AG04449 (cell line): ENCODE measurements at regions of chr12 and their contacts with region 1.

Region 1: DNA sequence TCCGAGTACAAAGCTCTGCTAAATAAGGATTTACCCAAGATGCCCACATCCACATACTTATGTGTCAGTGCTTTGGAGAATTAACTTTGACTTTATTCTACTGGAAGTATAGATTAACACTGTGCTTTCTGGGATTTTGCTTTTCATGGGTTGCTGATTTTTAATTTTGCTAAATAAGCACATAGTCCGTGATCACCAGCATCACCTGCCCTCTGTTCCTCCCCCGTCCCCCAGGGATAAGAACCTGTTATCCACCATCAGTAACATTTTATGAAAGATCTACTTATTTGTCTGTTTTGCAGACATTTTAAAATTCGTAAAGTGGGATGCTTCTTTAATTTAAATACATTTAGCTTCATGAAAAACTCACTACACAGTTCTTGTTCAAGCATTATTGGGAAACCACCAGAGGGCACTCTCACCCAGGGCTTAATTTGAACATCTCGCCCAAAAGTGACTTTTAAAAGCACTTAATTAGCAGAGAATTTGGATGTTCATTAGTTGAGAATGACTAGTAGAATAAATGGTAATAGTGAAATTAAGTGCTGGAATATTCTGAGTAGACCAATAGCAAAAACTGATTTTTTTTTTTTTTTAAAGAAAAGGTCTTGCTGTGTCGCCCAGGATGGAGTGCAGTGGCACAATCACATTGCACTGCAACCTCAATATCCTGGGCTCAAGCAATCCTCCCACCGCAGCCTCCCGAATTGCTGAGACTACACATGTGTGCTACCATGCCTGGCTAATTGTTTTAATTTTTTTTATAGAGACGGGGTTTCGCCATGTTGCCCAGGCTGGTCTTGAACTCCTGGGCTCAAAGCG is 35.7 kb downstream of the MRPL42 start:
- DNase-seq: no peak
- H3K4me3 ChIP-seq: no peak overlapping the region
- CTCF ChIP-seq: peak; percentile 55

Region 2: DNA sequence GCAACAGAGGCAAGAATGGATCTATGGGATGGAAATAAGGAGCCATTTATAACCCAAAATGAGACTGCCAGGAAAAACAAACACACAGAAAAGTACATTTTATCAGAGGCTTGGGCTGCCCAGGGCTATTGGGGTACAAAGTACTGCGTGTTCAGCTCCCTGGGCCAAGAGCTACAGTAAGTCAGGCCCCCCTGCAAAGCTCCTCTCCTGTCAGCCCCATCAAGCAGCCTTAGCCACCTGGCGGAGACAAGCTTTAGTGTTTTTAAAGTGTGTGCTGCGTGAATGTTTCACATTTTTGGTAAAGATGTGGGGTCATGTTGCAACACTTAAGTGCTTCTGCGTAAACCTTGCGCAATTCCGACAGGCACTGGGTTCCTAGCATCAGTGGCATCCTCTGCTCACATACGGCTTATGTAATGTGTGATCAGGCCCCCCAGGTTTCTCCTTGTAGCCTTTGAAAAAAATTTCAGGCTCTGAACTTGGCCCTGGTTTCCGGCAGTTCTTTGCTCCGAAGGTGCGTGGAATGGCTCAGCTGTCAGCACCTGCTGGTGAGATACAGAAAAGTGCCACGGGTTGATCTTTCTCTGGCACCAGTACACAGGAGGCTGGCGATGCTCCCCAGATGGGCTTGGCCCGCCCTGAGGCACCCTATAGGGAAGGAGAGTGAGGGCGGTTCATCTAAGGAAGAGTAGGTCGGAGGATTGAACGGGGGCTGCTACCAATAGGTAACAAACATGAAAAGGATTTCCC is 375.3 kb before region 1 on chr12:
- CTCF ChIA-PET with region 1: no interaction called
- POLR2A ChIA-PET with region 1: no interaction called
- DNase-seq: no peak
- H3K4me3 ChIP-seq: no peak overlapping the region
- CTCF ChIP-seq: no peak

Region 3: GRCh38 chr12:93476555-93476954 is 26.5 kb before region 1 on chr12:
- CTCF ChIA-PET with region 1: interaction called, 11 read pairs
- POLR2A ChIA-PET with region 1: no interaction called
- DNase-seq: no peak
- H3K4me3 ChIP-seq: no peak overlapping the region
- CTCF ChIP-seq: no peak

Region 4: GRCh38 chr12:93514853-93515252 is 11.8 kb after region 1 on chr12:
- CTCF ChIA-PET with region 1: interaction called, 80 read pairs
- POLR2A ChIA-PET with region 1: no interaction called
- DNase-seq: peak; percentile 68
- H3K4me3 ChIP-seq: no peak overlapping the region
- CTCF ChIP-seq: no peak

Region 5: DNA sequence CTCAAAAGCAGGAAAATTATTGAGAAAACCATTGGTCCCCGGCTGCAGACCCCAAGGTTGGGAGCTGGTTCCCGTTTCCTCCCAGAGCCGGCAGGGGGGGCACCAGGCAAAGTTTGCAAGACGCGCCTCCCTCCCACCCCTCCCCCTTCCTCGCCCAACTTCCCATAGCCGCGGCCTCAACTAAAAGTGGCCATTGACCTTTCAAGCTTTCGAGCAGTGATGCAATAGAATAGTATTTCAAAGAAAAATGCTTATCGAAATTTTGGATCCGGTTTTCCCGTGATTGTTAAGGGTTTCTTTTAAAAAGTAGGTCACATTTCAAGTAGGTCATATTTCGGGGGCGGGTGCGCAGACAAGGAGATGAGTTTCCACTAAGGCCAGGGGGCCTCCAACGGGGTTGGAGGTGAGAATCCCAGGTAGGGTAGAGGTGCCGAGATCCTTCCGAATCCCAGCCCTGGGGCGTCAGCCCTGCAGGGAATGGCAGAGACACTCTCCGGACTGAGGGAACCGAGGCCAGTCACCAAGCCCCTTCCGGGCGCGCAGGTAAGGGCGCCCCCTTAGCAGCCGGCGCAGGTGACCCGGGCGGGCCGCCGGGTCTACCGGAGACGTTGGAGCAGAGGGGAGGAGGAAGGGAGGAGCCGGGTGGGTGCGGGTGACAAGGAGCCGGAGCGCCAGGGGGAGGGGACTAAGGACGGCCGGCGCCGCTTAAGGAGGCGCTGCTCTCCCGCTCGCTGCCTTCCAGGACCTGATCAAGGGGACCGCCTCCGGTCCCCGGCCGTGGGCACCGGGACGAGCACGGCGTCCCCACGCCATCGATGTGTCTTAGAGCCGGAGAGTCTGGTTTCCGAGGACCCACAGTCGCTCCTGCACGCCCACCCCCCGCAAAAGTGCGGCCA is 66.9 kb after region 1 on chr12:
- CTCF ChIA-PET with region 1: interaction called, 21 read pairs
- POLR2A ChIA-PET with region 1: no interaction called
- DNase-seq: no peak
- H3K4me3 ChIP-seq: peak overlapping the region; percentile 67
- CTCF ChIP-seq: peak; percentile 89